ENCODE measurements at regions of chr11 and their contacts with region 1.

Region 1: GRCh38 chr11:72030472-72031045 is 31.9 kb downstream of the IL18BP start:
- DNase-seq: no peak
- ATAC-seq: no peak
- H3K4me3 ChIP-seq: no peak overlapping the region
- H3K27ac ChIP-seq: no peak overlapping the region
- H3K4me1 ChIP-seq: peaks cover 0 to 2% of the 10 kb centered on the region in 2 experiments; a peak in 1 of 4 replicates
- H3K27me3 ChIP-seq: no peaks in the 10 kb centered on the region
- CTCF ChIP-seq: no peak
- POLR2A ChIP-seq: no peak
- RAD21 ChIP-seq: no peak

Region 2: DNA sequence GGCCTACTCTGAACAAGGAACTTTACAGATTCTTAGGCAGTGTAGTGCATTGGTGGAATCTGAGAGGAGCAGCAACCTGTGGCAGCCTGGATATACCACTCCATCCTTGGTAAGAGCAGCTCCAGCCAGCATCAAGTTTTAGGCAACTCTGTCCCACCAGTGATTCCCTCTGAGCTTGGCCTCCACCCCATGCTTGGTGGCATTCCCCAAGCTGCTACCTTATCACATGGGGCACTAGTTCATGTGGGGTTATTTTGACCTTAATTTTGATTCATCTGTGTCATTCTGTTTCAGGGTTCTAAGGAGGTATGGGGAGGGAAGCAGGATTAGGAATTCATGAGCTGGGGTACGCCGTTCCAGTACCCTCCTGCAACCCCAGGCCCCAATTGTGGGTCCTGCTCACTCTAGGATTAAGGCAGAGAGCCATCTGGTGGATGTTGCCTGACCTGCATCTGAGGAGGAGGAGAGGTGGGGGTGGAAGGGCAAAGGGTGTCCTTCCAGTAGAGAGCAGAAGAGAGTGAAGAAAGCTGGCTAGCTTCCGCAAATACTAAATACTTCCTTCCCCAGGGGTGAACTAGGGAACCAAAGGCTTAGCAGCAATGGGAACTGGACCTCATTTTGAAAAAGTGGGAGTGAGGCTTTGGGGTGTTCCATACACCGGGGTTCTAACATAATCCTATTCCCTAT is 60.6 kb after region 1 on chr11:
- CTCF ChIA-PET with region 1: interaction called, 67 read pairs
- POLR2A ChIA-PET with region 1: interaction called, 5 read pairs
- RAD21 ChIA-PET with region 1: interaction called, 6 to 19 read pairs
- intact Hi-C with region 1: loop called (anchors 1 kb)
- DNase-seq: no peak
- ATAC-seq: peak; percentile 97
- H3K4me3 ChIP-seq: no peak overlapping the region
- H3K27ac ChIP-seq: no peak overlapping the region
- H3K4me1 ChIP-seq: peaks cover 0 to 5% of the 10 kb centered on the region in 2 experiments; a peak in 1 of 4 replicates
- H3K27me3 ChIP-seq: no peaks in the 10 kb centered on the region
- CTCF ChIP-seq: peak; percentile 83 to 97 (median 88)
- POLR2A ChIP-seq: no peak
- RAD21 ChIP-seq: peak; percentile 89

Region 3: GRCh38 chr11:72144807-72145560 is 114.4 kb after region 1 on chr11:
- CTCF ChIA-PET with region 1: interaction called, 30 read pairs
- POLR2A ChIA-PET with region 1: no interaction called
- RAD21 ChIA-PET with region 1: interaction called, 8 read pairs
- intact Hi-C with region 1: loop called (anchors 1 kb)
- DNase-seq: no peak
- ATAC-seq: no peak
- H3K4me3 ChIP-seq: no peak overlapping the region
- H3K27ac ChIP-seq: no peak overlapping the region
- H3K4me1 ChIP-seq: peaks cover 0 to 14% of the 10 kb centered on the region in 2 experiments; a peak in 1 of 4 replicates
- H3K27me3 ChIP-seq: no peaks in the 10 kb centered on the region
- CTCF ChIP-seq: no peak
- POLR2A ChIP-seq: no peak
- RAD21 ChIP-seq: no peak

Region 4: DNA sequence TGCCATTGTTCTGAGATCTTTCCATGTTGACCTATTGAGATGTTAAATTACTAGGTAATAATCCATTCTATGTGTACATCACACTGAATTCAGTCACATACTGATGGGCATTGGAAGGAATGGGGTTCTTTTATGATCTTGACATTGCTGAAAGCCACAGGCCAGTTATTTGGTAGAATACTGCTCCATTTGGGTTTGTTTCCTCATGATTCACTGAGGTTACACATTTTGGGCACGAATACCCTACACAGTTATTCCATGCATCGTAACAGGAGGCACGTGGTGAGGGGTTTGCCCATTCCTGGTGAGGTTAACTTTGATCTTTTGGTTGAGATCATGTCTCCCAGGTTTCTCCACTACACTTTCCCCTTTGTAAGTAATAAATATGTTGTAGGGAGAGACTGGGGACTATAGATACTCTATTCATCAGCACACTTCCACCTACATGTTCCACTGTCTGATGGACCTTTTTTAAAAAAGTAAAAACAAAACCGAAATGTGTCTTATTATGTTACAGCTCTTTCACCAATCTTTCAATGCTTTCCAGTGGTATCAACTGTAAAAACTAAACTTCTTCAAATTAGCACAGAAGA is 149.3 kb after region 1 on chr11:
- CTCF ChIA-PET with region 1: interaction called, 13 read pairs
- POLR2A ChIA-PET with region 1: interaction called, 3 read pairs
- RAD21 ChIA-PET with region 1: interaction called in 1 of 2 experiments, 4 read pairs
- intact Hi-C with region 1: loop called (anchors 1 kb)
- DNase-seq: no peak
- ATAC-seq: no peak
- H3K4me3 ChIP-seq: no peak overlapping the region
- H3K27ac ChIP-seq: no peak overlapping the region
- H3K4me1 ChIP-seq: peaks cover 0 to 8% of the 10 kb centered on the region in 2 experiments; a peak in 2 of 4 replicates
- H3K27me3 ChIP-seq: peaks cover 7% of the 10 kb centered on the region; the same call in 1 of the 2 replicates
- CTCF ChIP-seq: no peak
- POLR2A ChIP-seq: no peak
- RAD21 ChIP-seq: no peak

Region 5: GRCh38 chr11:72191961-72192381 is 161.4 kb after region 1 on chr11 and contains the start of gene FOLR1:
- CTCF ChIA-PET with region 1: no interaction called
- POLR2A ChIA-PET with region 1: no interaction called
- RAD21 ChIA-PET with region 1: no interaction called
- intact Hi-C with region 1: no loop called
- DNase-seq: peak; percentile 54
- ATAC-seq: peak; percentile 96
- H3K4me3 ChIP-seq: 0 out of 4 replicates have a peak within 1 kb of the TSS, but pooled peaks of 1 of the 2 experiments have one; percentile 5
- H3K27ac ChIP-seq: no peak within 1 kb of the TSS
- H3K4me1 ChIP-seq: peaks cover 13 to 20% of the 10 kb centered on the region in 2 experiments
- H3K27me3 ChIP-seq: no peaks in the 10 kb centered on the region
- CTCF ChIP-seq: no peak
- POLR2A ChIP-seq: no peak
- RAD21 ChIP-seq: no peak
- total RNA-seq, gene FOLR1: 4.8 TPM

Region 6: DNA sequence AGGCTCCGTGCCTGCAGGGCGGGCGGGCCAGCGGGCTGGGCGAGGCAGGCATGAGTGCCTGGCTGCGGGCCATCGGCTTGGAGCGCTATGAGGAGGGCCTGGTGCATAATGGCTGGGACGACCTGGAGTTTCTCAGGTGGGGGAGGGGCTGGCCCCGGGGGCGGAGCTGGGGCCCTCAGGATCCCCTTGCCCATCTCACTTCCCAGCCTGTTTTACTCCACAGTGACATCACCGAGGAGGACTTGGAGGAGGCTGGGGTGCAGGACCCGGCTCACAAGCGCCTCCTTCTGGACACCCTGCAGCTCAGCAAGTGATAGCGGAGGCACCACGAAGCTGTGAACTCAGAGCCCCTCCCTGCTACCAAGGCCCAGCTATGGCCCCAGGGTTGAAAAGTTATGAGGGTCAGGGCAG is 207.5 kb after region 1 on chr11:
- CTCF ChIA-PET with region 1: interaction called, 9 read pairs
- POLR2A ChIA-PET with region 1: no interaction called
- RAD21 ChIA-PET with region 1: no interaction called
- intact Hi-C with region 1: loop called (anchors 1 kb)
- DNase-seq: peak; percentile 44
- ATAC-seq: peak; percentile 94
- H3K4me3 ChIP-seq: no peak overlapping the region
- H3K27ac ChIP-seq: no peak overlapping the region
- H3K4me1 ChIP-seq: peaks cover 0 to 4% of the 10 kb centered on the region in 2 experiments; a peak in 1 of 4 replicates
- H3K27me3 ChIP-seq: no peaks in the 10 kb centered on the region
- CTCF ChIP-seq: peak; percentile 62 to 92 (median 86); a peak in 5 of 6 replicates
- POLR2A ChIP-seq: no peak
- RAD21 ChIP-seq: peak; percentile 72

Region 7: GRCh38 chr11:72413914-72414628 is 383.5 kb after region 1 on chr11:
- CTCF ChIA-PET with region 1: interaction called, 9 read pairs
- POLR2A ChIA-PET with region 1: no interaction called
- RAD21 ChIA-PET with region 1: no interaction called
- intact Hi-C with region 1: loop called (anchors 1 kb)
- DNase-seq: peak; percentile 57
- ATAC-seq: peak; percentile 90
- H3K4me3 ChIP-seq: no peak overlapping the region
- H3K27ac ChIP-seq: no peak overlapping the region
- H3K4me1 ChIP-seq: peaks cover 0 to 9% of the 10 kb centered on the region in 2 experiments; a peak in 2 of 4 replicates
- H3K27me3 ChIP-seq: no peaks in the 10 kb centered on the region
- CTCF ChIP-seq: peak; percentile 86 to 93 (median 90)
- POLR2A ChIP-seq: no peak
- RAD21 ChIP-seq: peak; percentile 82